Activated T-helper 1 cell treated with anti-CD3 and anti-CD28 coated beads, Interleukin-12 subunit alpha, Interleukin-12 subunit beta, Interleukin-2, Interleukin-4 antibody, amounts not matched to agents 30 ng/mL and 10 ng/mL and 1 ng/mL, durations not matched to agents 14 hours and 24 hours and 36 hours (primary cell): ENCODE measurements at regions of chr10 and their contacts with region 1.

Region 1: DNA sequence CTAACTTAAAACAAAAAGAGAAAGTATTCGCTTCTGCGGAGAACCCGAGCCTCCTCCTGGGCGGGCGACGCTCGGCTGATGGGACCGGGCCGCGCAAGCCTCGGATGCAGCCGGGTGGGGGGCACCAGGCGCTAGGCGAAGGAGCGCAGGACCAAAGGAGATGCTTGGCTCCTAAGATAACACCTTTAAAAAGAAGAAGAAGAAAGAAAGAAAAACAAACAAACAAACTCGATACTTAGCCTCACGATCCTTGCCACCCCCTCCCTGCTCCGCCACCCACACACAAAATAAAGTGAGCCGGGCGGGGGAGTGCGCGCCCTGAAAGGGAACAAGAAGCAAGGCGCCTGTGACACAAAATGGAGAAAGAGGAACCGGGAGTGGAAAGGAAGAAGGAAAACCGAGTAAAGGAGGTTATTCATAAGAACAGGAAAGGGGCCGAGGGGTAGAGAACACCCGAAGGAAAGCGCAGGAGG is 34.0 kb upstream of the EBLN1 start:
- DNase-seq: peak; percentile 58
- H3K4me3 Mint-ChIP-seq: peak overlapping the region; percentile 88
- H3K27ac Mint-ChIP-seq: peak overlapping the region; percentile 98
- H3K4me1 Mint-ChIP-seq: peaks cover 44% of the 10 kb centered on the region
- H3K27me3 Mint-ChIP-seq: peaks cover 18% of the 10 kb centered on the region

Region 2: DNA sequence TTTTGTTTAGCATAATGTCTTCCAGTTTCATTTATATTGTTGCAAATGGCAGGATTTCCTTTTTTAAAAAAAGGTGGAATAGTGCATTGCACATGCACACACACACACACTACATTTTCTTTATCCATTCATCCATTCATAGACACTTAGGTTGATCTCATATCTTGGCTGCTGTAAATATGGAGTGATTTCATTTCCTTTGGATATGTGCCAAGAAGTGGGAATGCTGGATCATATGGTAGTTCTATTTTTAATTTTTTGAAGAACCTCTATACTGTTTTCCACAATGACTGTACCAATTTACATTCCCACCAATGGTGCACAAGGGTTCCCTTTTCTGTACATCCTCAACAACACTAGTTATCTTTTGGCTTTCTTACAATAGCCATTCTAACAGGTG is 102.8 kb before region 1 on chr10:
- intact Hi-C with region 1: no loop called
- DNase-seq: no peak
- H3K4me3 Mint-ChIP-seq: no peak overlapping the region
- H3K27ac Mint-ChIP-seq: no peak overlapping the region
- H3K4me1 Mint-ChIP-seq: no peaks in the 10 kb centered on the region
- H3K27me3 Mint-ChIP-seq: peaks cover 4% of the 10 kb centered on the region

Region 3: DNA sequence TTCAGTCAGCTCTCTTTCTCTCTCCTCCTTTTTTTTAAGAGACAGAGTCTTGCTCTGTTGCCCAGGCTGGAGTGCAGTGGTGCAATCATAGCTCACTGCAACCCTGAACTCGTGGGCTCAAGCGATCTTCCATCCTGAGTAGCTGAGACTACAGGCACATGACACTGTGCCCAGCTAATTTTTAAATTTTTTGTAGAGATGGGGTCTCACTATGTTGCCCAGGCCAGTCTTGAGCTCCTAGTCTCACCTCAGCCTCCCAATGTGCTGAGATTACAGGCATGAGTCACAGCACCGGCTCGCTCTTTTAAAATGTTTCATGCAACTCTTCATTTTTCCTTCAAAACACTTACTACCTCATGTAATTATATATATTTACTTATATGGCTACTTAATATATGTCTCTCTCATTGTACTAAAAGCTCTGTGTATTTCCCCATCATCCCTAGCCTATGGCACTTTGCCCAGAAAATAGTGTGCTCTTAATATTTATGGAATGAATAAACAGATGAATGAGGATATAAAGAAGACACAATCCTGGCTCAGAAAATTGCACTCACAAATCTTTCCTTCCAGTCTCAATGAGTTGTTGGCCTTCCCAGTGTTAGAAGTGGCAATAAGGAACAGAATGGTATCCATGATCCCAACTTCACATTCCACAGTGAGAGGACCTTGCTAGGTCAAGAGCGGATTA is 67.9 kb before region 1 on chr10:
- intact Hi-C with region 1: no loop called
- DNase-seq: no peak
- H3K4me3 Mint-ChIP-seq: no peak overlapping the region
- H3K27ac Mint-ChIP-seq: no peak overlapping the region
- H3K4me1 Mint-ChIP-seq: no peaks in the 10 kb centered on the region
- H3K27me3 Mint-ChIP-seq: peaks cover 24% of the 10 kb centered on the region

Region 4: DNA sequence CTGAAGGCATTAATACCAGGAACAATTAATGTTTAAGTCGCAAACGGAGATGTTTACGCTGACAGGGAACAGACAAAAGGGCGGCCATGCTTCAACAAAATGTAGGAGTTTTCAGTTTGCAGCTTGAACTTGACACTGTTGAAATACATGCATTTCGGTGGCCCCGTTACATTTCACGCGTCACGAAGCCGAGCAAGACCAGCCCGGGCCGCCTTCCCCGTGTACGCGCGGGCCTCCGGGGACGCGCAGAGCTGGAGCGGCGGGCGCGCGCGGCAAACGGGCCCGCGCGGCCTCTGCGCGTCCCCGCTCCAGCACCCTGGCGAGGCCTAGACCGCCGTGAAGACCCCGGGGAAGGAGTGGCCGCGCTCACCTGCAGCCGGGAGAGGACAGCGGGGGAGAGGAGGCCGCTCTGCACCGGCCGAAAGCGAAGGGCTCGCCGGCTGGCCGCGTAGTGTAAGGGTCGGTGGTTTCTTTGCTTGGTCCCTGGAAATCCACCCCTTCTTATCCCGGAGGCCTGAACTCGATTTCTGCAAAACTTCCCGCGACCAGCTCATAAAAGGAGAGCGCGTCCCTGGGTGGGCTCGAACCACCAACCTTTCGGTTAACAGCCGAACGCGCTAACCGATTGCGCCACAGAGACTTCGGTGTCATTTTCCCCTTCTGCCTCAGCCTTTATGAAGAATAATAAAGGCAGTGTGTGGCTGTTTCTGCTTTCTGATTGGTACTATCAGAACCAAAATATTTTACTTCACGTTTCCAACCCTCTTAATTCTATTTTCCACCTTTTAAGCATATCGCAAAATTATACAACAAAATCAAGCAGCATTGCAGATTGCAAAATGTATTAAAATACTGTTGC is 22.6 kb before region 1 on chr10:
- intact Hi-C with region 1: loop called (anchors 1 kb)
- DNase-seq: peak; percentile 77
- H3K4me3 Mint-ChIP-seq: peak overlapping the region; percentile 92
- H3K27ac Mint-ChIP-seq: peak overlapping the region; percentile 98
- H3K4me1 Mint-ChIP-seq: peaks cover 32% of the 10 kb centered on the region
- H3K27me3 Mint-ChIP-seq: peaks cover 11% of the 10 kb centered on the region

Region 5: GRCh38 chr10:22308390-22308789 is 56.6 kb after region 1 on chr10:
- intact Hi-C with region 1: loop called (anchors 1 kb)
- DNase-seq: peak; percentile 41
- H3K4me3 Mint-ChIP-seq: no peak overlapping the region
- H3K27ac Mint-ChIP-seq: peak overlapping the region; percentile 71
- H3K4me1 Mint-ChIP-seq: peaks cover 29% of the 10 kb centered on the region
- H3K27me3 Mint-ChIP-seq: peaks cover 1% of the 10 kb centered on the region

Region 6: GRCh38 chr10:22316285-22317120 is 64.7 kb after region 1 on chr10 and contains the start of gene COMMD3:
- intact Hi-C with region 1: loop called (anchors 1 kb)
- DNase-seq: peak; percentile 77
- H3K4me3 Mint-ChIP-seq: peak within 1 kb of the TSS; percentile 98
- H3K27ac Mint-ChIP-seq: peak within 1 kb of the TSS; percentile 100
- H3K4me1 Mint-ChIP-seq: peaks cover 50% of the 10 kb centered on the region
- H3K27me3 Mint-ChIP-seq: peaks cover 2% of the 10 kb centered on the region
- total RNA-seq, gene COMMD3: 78.7 and 84.4 TPM in 2 replicates

Region 7: GRCh38 chr10:22655311-22655981 is 403.7 kb after region 1 on chr10:
- intact Hi-C with region 1: loop called (anchors 10 kb)
- DNase-seq: no peak
- H3K4me3 Mint-ChIP-seq: peak overlapping the region; percentile 72
- H3K27ac Mint-ChIP-seq: peak overlapping the region; percentile 94
- H3K4me1 Mint-ChIP-seq: peaks cover 95% of the 10 kb centered on the region
- H3K27me3 Mint-ChIP-seq: no peaks in the 10 kb centered on the region

Region 8: DNA sequence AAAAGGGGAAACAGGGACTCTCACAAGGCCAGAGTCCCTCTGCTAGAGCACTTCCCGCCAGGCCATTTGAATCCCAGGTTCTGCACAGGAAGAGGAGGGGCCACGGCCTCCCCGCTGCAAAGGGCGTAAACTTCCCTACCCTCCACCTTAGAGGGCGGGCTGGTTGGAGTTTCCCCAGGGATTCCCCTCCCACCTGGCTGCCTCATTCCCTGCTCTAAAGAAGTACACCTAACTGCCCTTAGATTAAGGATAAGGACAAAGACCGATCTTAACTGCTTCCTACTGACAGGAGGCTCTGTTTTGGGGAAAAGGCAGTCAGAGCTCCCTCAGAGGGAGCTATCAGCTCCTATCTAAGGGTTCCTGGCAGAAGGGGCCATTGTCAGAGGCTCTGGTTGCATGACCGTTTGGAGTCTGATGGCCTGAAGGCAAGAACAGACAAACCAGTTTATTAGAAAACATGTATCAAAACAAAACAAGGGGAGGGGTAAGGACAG is 574.1 kb after region 1 on chr10:
- intact Hi-C with region 1: no loop called
- DNase-seq: no peak
- H3K4me3 Mint-ChIP-seq: no peak overlapping the region
- H3K27ac Mint-ChIP-seq: no peak overlapping the region
- H3K4me1 Mint-ChIP-seq: no peaks in the 10 kb centered on the region
- H3K27me3 Mint-ChIP-seq: peaks cover 2% of the 10 kb centered on the region

Region 9: DNA sequence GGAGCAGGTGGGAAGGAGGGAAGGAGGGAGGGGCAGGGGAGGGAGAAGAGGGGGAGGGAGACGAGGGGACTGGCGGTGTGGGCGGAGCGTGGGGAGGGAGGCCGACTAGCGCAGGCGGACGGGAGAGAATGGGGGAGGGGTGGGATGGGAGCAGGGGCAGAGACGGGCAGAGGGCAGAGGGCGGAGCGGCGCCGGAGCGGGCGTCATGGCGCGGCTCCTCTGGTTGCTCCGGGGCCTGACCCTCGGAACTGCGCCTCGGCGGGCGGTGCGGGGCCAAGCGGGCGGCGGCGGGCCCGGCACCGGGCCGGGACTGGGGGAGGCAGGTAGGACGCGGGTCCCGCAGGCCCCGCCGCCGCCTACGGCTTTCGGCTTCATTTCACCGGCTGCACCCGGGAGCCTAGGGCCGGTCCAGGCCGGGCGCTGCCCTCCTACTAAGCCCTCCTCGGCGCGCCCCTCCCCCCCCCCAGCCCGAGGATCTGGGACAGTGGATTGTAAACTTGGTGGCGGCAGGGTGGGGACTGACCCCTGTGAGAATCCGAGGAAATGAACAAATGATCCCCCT is 843.7 kb after region 1 on chr10 and contains the start of gene MSRB2:
- intact Hi-C with region 1: loop called (anchors 5 kb)
- DNase-seq: peak; percentile 64
- H3K4me3 Mint-ChIP-seq: peak within 1 kb of the TSS; percentile 92
- H3K27ac Mint-ChIP-seq: peak within 1 kb of the TSS; percentile 91
- H3K4me1 Mint-ChIP-seq: peaks cover 36% of the 10 kb centered on the region
- H3K27me3 Mint-ChIP-seq: peaks cover 6% of the 10 kb centered on the region
- total RNA-seq, gene MSRB2: 3.0 and 4.0 TPM in 2 replicates